ENCODE measurements at regions of chr9 and their contacts with region 1.

Region 1: DNA sequence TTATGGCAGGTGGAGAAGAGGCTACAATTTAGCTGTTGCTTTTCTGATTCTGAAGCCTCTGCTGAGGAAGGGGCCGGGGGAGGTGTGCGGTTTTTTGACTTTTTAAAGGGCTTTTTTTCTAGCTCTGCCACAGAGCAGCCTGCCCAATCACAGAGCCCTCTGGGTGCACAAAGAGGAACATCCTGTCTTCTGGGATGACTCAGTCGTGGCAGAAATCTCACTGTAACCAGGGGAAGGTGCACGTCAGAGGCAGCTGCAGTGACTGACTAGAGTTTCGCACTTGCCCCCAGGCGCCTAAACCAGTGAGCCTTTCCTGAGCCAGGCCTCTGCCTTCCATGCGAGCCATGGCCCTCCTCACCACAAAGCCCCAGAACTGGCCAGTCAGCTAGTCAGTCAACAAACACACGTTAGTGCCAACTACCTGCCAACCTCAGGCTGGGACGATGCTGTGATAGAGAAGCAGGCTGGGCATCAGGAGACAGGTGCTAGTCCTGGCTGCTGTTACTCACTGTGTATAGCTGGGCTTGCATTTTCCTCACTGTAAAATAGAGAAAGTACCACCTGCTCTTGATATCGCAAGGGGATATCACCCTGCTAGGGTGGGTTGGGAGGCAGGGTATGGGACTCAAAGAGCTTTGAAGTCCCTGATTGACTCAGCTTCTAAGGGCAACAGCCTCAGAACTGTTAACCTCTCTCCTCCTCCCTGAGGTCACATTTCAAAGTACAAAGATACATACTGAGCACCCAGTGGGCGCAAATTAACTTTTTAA is 2.2 kb downstream of the AKNA start:
- DNase-seq: peak; percentile 97
- H3K4me3 Mint-ChIP-seq: peak overlapping the region; percentile 97
- H3K27ac Mint-ChIP-seq: peak overlapping the region; percentile 100
- H3K4me1 Mint-ChIP-seq: peaks cover 67% of the 10 kb centered on the region
- H3K27me3 Mint-ChIP-seq: no peaks in the 10 kb centered on the region

Region 2: DNA sequence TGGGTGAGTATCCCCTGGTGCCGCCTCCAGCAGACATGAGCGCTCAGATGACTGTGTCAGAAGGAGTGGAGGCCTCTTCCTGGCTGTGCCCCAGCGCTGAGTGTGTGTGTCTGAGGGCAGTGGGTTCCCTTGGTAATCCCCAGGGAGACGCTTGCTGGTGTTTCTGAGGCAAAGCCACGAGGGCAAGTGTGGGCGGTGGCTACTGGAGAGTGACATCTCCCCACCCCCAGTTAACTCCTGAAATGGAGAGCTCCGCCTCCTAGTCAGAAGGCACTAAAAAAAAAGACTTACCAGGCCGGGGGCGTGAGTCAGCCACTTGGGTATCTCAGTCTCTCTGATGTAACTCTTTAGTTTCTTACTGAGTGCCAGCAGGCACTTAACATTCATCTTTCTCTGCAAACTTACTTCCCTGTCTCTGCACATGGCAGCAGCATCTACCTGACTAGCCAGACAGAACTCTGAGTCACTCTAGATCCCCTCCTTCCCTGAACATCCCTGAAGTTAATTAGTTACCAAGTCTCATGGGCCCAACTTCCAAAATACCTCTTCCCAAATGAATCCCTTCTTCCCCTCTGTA is 36.6 kb before region 1 on chr9:
- CTCF ChIA-PET with region 1: interaction called, 14 read pairs
- intact Hi-C with region 1: loop called (anchors 1 kb)
- DNase-seq: peak; percentile 98
- H3K4me3 Mint-ChIP-seq: peak overlapping the region; percentile 24
- H3K27ac Mint-ChIP-seq: peak overlapping the region; percentile 98
- H3K4me1 Mint-ChIP-seq: peaks cover 49% of the 10 kb centered on the region
- H3K27me3 Mint-ChIP-seq: no peaks in the 10 kb centered on the region

Region 3: GRCh38 chr9:114372921-114373448 is 12.6 kb before region 1 on chr9:
- CTCF ChIA-PET with region 1: interaction called, 23 read pairs
- intact Hi-C with region 1: loop called (anchors 1 kb)
- DNase-seq: peak; percentile 93
- H3K4me3 Mint-ChIP-seq: peak overlapping the region; percentile 67
- H3K27ac Mint-ChIP-seq: peak overlapping the region; percentile 95
- H3K4me1 Mint-ChIP-seq: peaks cover 81% of the 10 kb centered on the region
- H3K27me3 Mint-ChIP-seq: no peaks in the 10 kb centered on the region

Region 4: GRCh38 chr9:114919611-114920010 is 534.0 kb after region 1 on chr9:
- CTCF ChIA-PET with region 1: no interaction called
- intact Hi-C with region 1: loop called (anchors 5 kb)
- DNase-seq: peak; percentile 68
- H3K4me3 Mint-ChIP-seq: peak overlapping the region; percentile 11
- H3K27ac Mint-ChIP-seq: peak overlapping the region; percentile 74
- H3K4me1 Mint-ChIP-seq: peaks cover 88% of the 10 kb centered on the region
- H3K27me3 Mint-ChIP-seq: no peaks in the 10 kb centered on the region

Measured in activated naive CD4-positive, alpha-beta T cell treated with anti-CD3 and anti-CD28 coated beads for 36 hours (primary cell).